ENCODE measurements at regions of chr12 and their contacts with region 1.

Region 1: DNA sequence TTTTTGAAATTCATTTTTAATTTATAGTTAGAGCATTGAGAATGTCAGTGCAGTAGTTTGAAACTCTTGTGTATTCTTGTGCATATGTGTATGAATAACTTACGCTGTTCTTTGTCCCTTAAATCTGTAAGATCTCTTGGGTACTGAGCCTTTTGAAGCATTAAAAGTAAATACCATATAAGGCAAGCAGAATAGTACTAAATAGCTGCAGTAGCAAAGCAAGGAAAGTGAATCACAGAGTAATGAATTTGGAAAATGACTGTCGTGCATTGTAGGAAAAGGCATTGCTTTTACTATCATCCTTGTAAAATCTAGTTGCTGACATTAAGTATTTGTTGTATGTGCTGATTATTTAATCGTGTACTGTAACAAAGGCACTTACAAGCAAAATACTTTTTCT is 12.1 kb downstream of the CNOT2 start:
- H3K4me3 ChIP-seq: no peak overlapping the region
- H3K27ac ChIP-seq: no peak overlapping the region
- H3K4me1 ChIP-seq: peaks cover 22% of the 10 kb centered on the region
- CTCF ChIP-seq: no peak

Region 2: DNA sequence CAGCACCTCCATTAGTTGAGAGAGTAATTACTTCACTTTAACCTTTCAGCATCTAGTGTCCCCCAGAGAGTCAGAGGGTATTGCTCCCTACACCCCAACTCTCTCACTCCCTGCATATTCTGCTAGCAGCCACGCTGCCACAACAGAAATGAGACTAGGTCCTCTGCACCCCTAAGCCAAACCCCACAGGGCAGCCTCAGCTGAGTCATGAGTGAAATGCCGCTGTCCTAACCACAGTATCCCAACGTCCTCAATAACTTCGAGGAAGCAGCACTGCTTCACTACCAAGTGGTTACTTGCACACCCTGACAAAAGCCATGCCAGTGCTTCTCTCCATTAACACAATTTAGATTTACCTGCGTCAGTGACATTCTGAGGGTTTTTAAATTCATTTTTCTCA is 914.0 kb before region 1 on chr12:
- CTCF ChIA-PET with region 1: no interaction called
- POLR2A ChIA-PET with region 1: no interaction called
- H3K4me3 ChIP-seq: no peak overlapping the region
- H3K27ac ChIP-seq: no peak overlapping the region
- H3K4me1 ChIP-seq: no peaks in the 10 kb centered on the region
- CTCF ChIP-seq: no peak

Region 3: DNA sequence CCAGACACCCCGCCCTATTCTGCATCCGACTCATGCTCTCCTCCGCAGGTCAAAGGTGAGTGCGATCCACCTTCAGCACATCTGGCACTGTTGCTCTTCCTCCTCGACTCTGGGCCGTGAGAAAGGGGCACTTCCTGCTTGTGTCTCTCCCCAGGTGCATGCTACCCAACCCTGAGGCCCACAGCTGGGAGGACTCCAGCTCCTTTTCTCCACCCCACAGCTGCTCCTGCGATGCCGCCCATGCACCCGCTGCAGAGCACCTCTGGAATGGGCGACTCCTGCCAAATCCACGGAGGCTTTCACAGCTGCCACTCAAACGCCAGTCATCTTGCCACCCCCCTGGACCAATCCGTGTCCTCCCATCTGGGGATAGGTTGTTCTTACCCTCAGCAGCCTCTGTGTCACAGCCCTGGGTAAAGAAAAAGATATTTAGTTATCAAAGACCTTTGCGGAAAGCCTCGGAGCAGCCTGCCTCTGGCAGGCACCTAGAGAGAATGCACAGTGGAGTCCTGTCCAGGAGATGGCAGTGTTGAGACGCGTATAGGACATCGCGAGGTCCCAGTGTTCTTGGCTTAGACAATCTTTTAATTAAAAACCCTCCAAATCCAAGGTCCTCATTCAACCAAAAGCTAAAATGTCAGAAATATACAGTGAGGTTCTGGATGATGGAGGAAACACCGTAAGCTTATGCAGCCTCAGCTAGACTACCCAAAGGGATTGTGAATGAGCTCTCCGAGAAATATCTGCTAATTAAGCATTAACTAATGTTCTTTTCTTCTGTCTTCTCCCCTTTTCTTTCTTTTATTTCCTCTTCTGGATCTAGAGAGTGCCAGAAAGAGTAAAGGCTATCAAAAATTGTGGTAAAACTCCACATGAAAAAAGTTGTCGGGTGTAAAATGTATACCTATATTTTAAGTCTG is 376.0 kb before region 1 on chr12:
- CTCF ChIA-PET with region 1: interaction called, 10 read pairs
- POLR2A ChIA-PET with region 1: no interaction called
- H3K4me3 ChIP-seq: no peak overlapping the region
- H3K27ac ChIP-seq: no peak overlapping the region
- H3K4me1 ChIP-seq: no peaks in the 10 kb centered on the region
- CTCF ChIP-seq: peak; percentile 64; the same call in 1 of the 2 replicates

Region 4: GRCh38 chr12:70236990-70237389 is 18.3 kb before region 1 on chr12:
- CTCF ChIA-PET with region 1: no interaction called
- POLR2A ChIA-PET with region 1: no interaction called
- H3K4me3 ChIP-seq: no peak overlapping the region
- H3K27ac ChIP-seq: no peak overlapping the region
- H3K4me1 ChIP-seq: no peaks in the 10 kb centered on the region
- CTCF ChIP-seq: no peak

Region 5: GRCh38 chr12:70267550-70267949 is 12.2 kb after region 1 on chr12:
- CTCF ChIA-PET with region 1: no interaction called
- POLR2A ChIA-PET with region 1: no interaction called
- H3K4me3 ChIP-seq: no peak overlapping the region
- H3K27ac ChIP-seq: no peak overlapping the region
- H3K4me1 ChIP-seq: peaks cover 27% of the 10 kb centered on the region
- CTCF ChIP-seq: no peak

Measured in HEK293 (cell line).